MCF 10A (cell line): ENCODE measurements at regions of chr15 and their contacts with region 1.

Region 1: GRCh38 chr15:35630526-35630925 is 84.6 kb upstream of the DPH6 start:
- DNase-seq: peak; percentile 84
- H3K4me3 Mint-ChIP-seq: no peak overlapping the region
- H3K27ac Mint-ChIP-seq: peak overlapping the region; percentile 30
- H3K4me1 Mint-ChIP-seq: peaks cover 17% of the 10 kb centered on the region
- H3K27me3 Mint-ChIP-seq: no peaks in the 10 kb centered on the region
- CTCF ChIP-seq: no peak

Region 2: DNA sequence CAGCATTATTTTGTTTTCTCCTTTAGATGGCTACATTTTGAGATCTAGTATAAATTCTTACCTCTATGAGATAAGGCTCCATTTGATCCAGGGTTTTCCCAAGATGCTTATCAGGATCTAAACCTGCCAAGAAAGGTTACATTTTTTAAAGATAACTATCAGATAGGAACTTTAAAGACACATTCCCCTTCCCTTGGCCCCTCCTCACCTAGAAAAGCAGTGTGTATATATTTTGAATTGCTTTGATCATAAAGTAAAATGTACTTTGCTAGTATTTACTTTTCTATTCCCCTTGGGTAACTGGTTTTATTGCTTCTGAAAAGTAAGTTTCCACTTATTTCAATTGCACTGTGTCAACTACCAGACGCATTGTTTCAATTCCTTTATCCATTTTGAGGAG is 219.8 kb before region 1 on chr15:
- CTCF ChIA-PET with region 1: no interaction called
- POLR2A ChIA-PET with region 1: no interaction called
- intact Hi-C with region 1: no loop called
- DNase-seq: no peak
- H3K4me3 Mint-ChIP-seq: no peak overlapping the region
- H3K27ac Mint-ChIP-seq: no peak overlapping the region
- H3K4me1 Mint-ChIP-seq: no peaks in the 10 kb centered on the region
- H3K27me3 Mint-ChIP-seq: no peaks in the 10 kb centered on the region
- CTCF ChIP-seq: no peak

Region 3: DNA sequence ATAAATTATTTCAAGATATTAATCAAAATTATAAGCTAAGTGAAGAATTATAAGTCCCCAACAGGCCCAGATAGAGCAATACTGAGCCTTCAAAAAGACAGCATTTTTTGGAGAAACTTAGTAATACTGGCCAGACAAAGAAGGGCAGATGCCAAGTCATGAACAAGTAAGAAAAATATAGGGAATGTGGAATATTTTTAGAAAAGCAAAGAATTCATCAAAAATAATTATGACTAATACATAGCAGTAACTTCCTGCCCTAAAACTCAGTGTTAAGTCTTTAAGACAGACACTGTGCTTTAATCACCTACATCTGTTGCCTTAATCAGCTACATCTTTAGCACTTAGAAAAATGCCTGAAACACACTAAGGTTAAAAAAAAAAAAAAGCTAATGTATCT is 115.8 kb before region 1 on chr15:
- CTCF ChIA-PET with region 1: no interaction called
- POLR2A ChIA-PET with region 1: no interaction called
- intact Hi-C with region 1: no loop called
- DNase-seq: no peak
- H3K4me3 Mint-ChIP-seq: no peak overlapping the region
- H3K27ac Mint-ChIP-seq: no peak overlapping the region
- H3K4me1 Mint-ChIP-seq: peaks cover 6% of the 10 kb centered on the region
- H3K27me3 Mint-ChIP-seq: no peaks in the 10 kb centered on the region
- CTCF ChIP-seq: no peak

Region 4: GRCh38 chr15:35560870-35561269 is 69.7 kb before region 1 on chr15:
- CTCF ChIA-PET with region 1: no interaction called
- POLR2A ChIA-PET with region 1: no interaction called
- intact Hi-C with region 1: loop called (anchors 5 kb)
- DNase-seq: no peak
- H3K4me3 Mint-ChIP-seq: no peak overlapping the region
- H3K27ac Mint-ChIP-seq: no peak overlapping the region
- H3K4me1 Mint-ChIP-seq: peaks cover 14% of the 10 kb centered on the region
- H3K27me3 Mint-ChIP-seq: no peaks in the 10 kb centered on the region
- CTCF ChIP-seq: no peak

Region 5: DNA sequence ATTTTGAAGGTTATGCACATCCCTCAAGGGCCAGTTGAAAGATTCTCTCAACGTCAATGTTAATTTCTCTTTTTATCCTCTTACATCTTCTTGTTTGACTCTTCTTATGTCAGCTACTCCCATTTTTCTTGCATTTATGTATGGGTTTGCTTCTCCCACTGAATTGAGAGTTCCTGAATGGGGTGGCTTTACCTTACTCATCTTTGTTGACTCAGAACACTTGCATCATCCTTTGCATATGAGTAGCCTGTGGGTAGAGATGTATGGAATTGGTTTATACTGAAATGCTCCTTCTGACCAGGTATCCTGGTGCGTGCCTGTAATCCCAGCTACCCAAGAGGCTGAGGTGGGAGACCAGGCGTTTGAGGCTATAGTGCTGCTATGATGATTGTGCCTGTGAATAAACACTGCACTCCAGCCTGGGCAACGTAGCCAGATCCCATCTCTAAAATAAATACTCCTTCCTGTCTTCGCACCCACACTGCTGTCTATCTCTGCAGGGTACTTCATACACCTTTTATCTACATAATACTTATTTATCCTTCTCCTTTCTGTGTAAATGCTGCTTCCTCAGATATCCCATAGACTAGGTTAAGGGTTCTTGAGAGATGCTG is 39.0 kb after region 1 on chr15:
- CTCF ChIA-PET with region 1: interaction called, 5 read pairs
- POLR2A ChIA-PET with region 1: no interaction called
- intact Hi-C with region 1: loop called (anchors 1 kb)
- DNase-seq: peak; percentile 60
- H3K4me3 Mint-ChIP-seq: no peak overlapping the region
- H3K27ac Mint-ChIP-seq: no peak overlapping the region
- H3K4me1 Mint-ChIP-seq: peaks cover 12% of the 10 kb centered on the region
- H3K27me3 Mint-ChIP-seq: no peaks in the 10 kb centered on the region
- CTCF ChIP-seq: no peak